H1 (cell line): ENCODE measurements at regions of chr3 and their contacts with region 1.

Region 1: GRCh38 chr3:14863333-14864100 is 44.8 kb downstream of the FGD5 start:
- DNase-seq: peak in 1 of 2 experiments; percentile 21
- H3K4me3 ChIP-seq: no peak overlapping the region
- H3K27ac ChIP-seq: no peak overlapping the region
- H3K4me1 ChIP-seq: peaks cover 4 to 16% (median 13%) of the 10 kb centered on the region in 4 experiments
- H3K27me3 ChIP-seq: no peaks in the 10 kb centered on the region
- CTCF ChIP-seq: peak; percentile 65 to 82 (median 80)
- EP300 ChIP-seq: no peak
- POLR2A ChIP-seq: no peak
- RAD21 ChIP-seq: peak; percentile 51 to 63

Region 2: GRCh38 chr3:14791343-14791945 is 72.1 kb before region 1 on chr3:
- CTCF ChIA-PET with region 1: interaction called, 54 read pairs
- POLR2A ChIA-PET with region 1: no interaction called
- DNase-seq: peak; percentile 57 to 89
- H3K4me3 ChIP-seq: peak overlapping the region in 1 of 4 experiments; percentile 42; a peak in 1 of 8 replicates
- H3K27ac ChIP-seq: no peak overlapping the region
- H3K4me1 ChIP-seq: peaks cover 0 to 4% (median 2%) of the 10 kb centered on the region in 4 experiments; a peak in 4 of 7 replicates
- H3K27me3 ChIP-seq: peaks cover 0 to 3% (median 0%) of the 10 kb centered on the region in 4 experiments; a peak in 1 of 7 replicates
- CTCF ChIP-seq: peak; percentile 91 to 97 (median 96)
- EP300 ChIP-seq: no peak
- POLR2A ChIP-seq: no peak
- RAD21 ChIP-seq: peak; percentile 97 to 98

Region 3: GRCh38 chr3:14847613-14848541 is 15.6 kb before region 1 on chr3:
- CTCF ChIA-PET with region 1: interaction called, 46 read pairs
- POLR2A ChIA-PET with region 1: interaction called, 4 read pairs
- DNase-seq: peak; percentile 38 to 66
- H3K4me3 ChIP-seq: peak overlapping the region in 1 of 4 experiments; percentile 11; a peak in 1 of 8 replicates
- H3K27ac ChIP-seq: 0 out of 2 replicates have a peak overlapping the region, but pooled peaks have one; percentile 12
- H3K4me1 ChIP-seq: peaks cover 14 to 35% (median 22%) of the 10 kb centered on the region in 4 experiments
- H3K27me3 ChIP-seq: no peaks in the 10 kb centered on the region
- CTCF ChIP-seq: no peak
- EP300 ChIP-seq: peak in 1 of 2 experiments; percentile 62; a peak in 1 of 3 replicates
- POLR2A ChIP-seq: peak in 1 of 2 experiments; percentile 22; a peak in 1 of 3 replicates
- RAD21 ChIP-seq: peak in 1 of 2 experiments; percentile 17; a peak in 1 of 4 replicates

Region 4: GRCh38 chr3:14885292-14885691 is 21.8 kb after region 1 on chr3:
- CTCF ChIA-PET with region 1: interaction called, 21 read pairs
- POLR2A ChIA-PET with region 1: no interaction called
- DNase-seq: no peak
- H3K4me3 ChIP-seq: no peak overlapping the region
- H3K27ac ChIP-seq: no peak overlapping the region
- H3K4me1 ChIP-seq: 0 out of 7 replicates have a peak, but pooled peaks cover 0 to 2% (median 0%) of the 10 kb centered on the region in 4 experiments
- H3K27me3 ChIP-seq: no peaks in the 10 kb centered on the region
- CTCF ChIP-seq: no peak
- EP300 ChIP-seq: no peak
- POLR2A ChIP-seq: no peak
- RAD21 ChIP-seq: no peak

Region 5: GRCh38 chr3:14902719-14903118 is 39.2 kb after region 1 on chr3:
- CTCF ChIA-PET with region 1: interaction called, 16 read pairs
- POLR2A ChIA-PET with region 1: no interaction called
- DNase-seq: no peak
- H3K4me3 ChIP-seq: no peak overlapping the region
- H3K27ac ChIP-seq: no peak overlapping the region
- H3K4me1 ChIP-seq: peaks cover 3 to 26% (median 19%) of the 10 kb centered on the region in 4 experiments
- H3K27me3 ChIP-seq: no peaks in the 10 kb centered on the region
- CTCF ChIP-seq: no peak
- EP300 ChIP-seq: no peak
- POLR2A ChIP-seq: no peak
- RAD21 ChIP-seq: no peak